PC-9 (cell line): ENCODE measurements at regions of chr15 and their contacts with region 1.

Region 1: GRCh38 chr15:82540055-82540983 is at the start of gene RPS17:
- DNase-seq: peak; percentile 79 to 96
- H3K4me3 ChIP-seq: peak within 1 kb of the TSS; percentile 100
- H3K27ac ChIP-seq: peak within 1 kb of the TSS; percentile 88
- H3K4me1 ChIP-seq: peaks cover 15% of the 10 kb centered on the region; the same call in 1 of the 2 replicates
- H3K27me3 ChIP-seq: no peaks in the 10 kb centered on the region
- CTCF ChIP-seq: peak; percentile 94
- total RNA-seq, gene RPS17: 1,891 and 1,969 TPM in 2 replicates

Region 2: GRCh38 chr15:82312586-82313349 is 227.6 kb before region 1 on chr15:
- CTCF ChIA-PET with region 1: no interaction called
- POLR2A ChIA-PET with region 1: no interaction called
- intact Hi-C with region 1: no loop called
- DNase-seq: no peak
- H3K4me3 ChIP-seq: no peak overlapping the region
- H3K27ac ChIP-seq: no peak overlapping the region
- H3K4me1 ChIP-seq: no peaks in the 10 kb centered on the region
- H3K27me3 ChIP-seq: peaks cover 10% of the 10 kb centered on the region; the same call in 1 of the 2 replicates
- CTCF ChIP-seq: no peak

Region 3: DNA sequence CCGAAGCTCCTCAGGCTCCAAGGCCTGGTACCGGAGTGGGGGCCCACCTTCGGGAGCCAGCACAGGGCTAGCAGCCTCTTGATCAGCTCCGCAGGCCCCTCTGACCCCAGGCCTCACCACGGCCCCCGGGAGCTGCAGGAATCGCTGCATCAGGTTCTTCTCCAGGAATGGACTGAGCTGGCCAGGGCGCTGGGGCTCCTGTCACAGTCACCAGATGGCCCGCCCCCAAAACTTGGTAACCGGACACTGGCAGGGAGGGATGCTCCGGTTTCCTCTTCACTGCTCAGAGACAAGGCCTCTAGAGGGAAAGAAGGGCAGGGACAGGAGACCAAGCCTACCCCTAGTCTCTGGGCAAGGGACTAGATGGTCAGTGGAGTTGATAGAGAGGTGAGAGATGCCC is 159.4 kb after region 1 on chr15:
- CTCF ChIA-PET with region 1: no interaction called
- POLR2A ChIA-PET with region 1: no interaction called
- intact Hi-C with region 1: no loop called
- DNase-seq: no peak
- H3K4me3 ChIP-seq: no peak overlapping the region
- H3K27ac ChIP-seq: no peak overlapping the region
- H3K4me1 ChIP-seq: no peaks in the 10 kb centered on the region
- H3K27me3 ChIP-seq: peaks cover 81% of the 10 kb centered on the region
- CTCF ChIP-seq: no peak

Region 4: GRCh38 chr15:82749951-82750830 is 209.9 kb after region 1 on chr15:
- CTCF ChIA-PET with region 1: no interaction called
- POLR2A ChIA-PET with region 1: interaction called, 7 read pairs
- intact Hi-C with region 1: loop called (anchors 1 kb)
- DNase-seq: peak; percentile 84 to 89
- H3K4me3 ChIP-seq: peak overlapping the region; percentile 83
- H3K27ac ChIP-seq: peak overlapping the region; percentile 74
- H3K4me1 ChIP-seq: peaks cover 25% of the 10 kb centered on the region
- H3K27me3 ChIP-seq: no peaks in the 10 kb centered on the region
- CTCF ChIP-seq: no peak

Region 5: GRCh38 chr15:82763361-82764116 is 223.2 kb after region 1 on chr15:
- CTCF ChIA-PET with region 1: no interaction called
- POLR2A ChIA-PET with region 1: no interaction called
- intact Hi-C with region 1: no loop called
- DNase-seq: no peak
- H3K4me3 ChIP-seq: no peak overlapping the region
- H3K27ac ChIP-seq: no peak overlapping the region
- H3K4me1 ChIP-seq: peaks cover 3% of the 10 kb centered on the region; the same call in 1 of the 2 replicates
- H3K27me3 ChIP-seq: no peaks in the 10 kb centered on the region
- CTCF ChIP-seq: no peak

Region 6: DNA sequence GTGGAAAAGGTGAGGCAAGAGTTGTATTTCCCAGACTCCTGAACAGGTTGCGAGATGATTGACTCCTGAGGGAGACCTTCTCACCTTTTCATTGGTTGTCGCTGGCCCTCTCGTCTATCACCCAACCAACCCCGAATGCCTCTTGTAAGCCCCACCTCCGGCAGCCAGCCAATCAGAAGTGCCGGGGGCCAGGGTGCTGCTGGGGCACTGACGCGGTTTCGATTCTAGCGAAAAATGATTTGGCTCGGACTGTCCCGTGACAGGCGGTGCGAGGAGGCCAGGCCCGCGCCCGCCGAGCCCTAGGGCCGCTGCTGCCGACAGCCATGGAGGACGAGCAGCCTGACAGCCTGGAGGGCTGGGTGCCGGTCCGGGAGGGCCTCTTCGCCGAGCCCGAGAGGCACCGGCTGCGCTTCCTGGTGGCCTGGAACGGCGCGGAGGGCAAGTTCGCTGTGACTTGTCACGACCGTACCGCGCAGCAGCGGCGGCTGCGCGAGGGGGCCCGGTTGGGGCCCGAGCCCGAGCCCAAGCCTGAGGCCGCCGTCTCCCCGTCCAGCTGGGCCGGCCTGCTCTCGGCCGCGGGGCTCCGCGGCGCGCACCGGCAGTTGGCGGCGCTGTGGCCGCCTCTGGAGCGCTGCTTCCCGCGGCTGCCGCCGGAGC is 269.2 kb after region 1 on chr15 and contains the start of gene WHAMM:
- CTCF ChIA-PET with region 1: no interaction called
- POLR2A ChIA-PET with region 1: interaction called, 5 read pairs
- intact Hi-C with region 1: loop called (anchors 1 kb)
- DNase-seq: peak; percentile 95 to 97
- H3K4me3 ChIP-seq: peak within 1 kb of the TSS; percentile 99
- H3K27ac ChIP-seq: peak within 1 kb of the TSS; percentile 80
- H3K4me1 ChIP-seq: peaks cover 17% of the 10 kb centered on the region
- H3K27me3 ChIP-seq: no peaks in the 10 kb centered on the region
- CTCF ChIP-seq: no peak
- total RNA-seq, gene WHAMM: 6.4 and 6.9 TPM in 2 replicates

Region 7: GRCh38 chr15:82890338-82891327 is 350.3 kb after region 1 on chr15:
- CTCF ChIA-PET with region 1: no interaction called
- POLR2A ChIA-PET with region 1: no interaction called
- intact Hi-C with region 1: no loop called
- DNase-seq: no peak
- H3K4me3 ChIP-seq: no peak overlapping the region
- H3K27ac ChIP-seq: no peak overlapping the region
- H3K4me1 ChIP-seq: no peaks in the 10 kb centered on the region
- H3K27me3 ChIP-seq: peaks cover 26% of the 10 kb centered on the region
- CTCF ChIP-seq: no peak

Region 8: GRCh38 chr15:82999905-83000671 is 459.8 kb after region 1 on chr15:
- CTCF ChIA-PET with region 1: no interaction called
- POLR2A ChIA-PET with region 1: no interaction called
- intact Hi-C with region 1: loop called (anchors 2 kb)
- DNase-seq: peak; percentile 14 to 50
- H3K4me3 ChIP-seq: peak overlapping the region; percentile 29; the same call in 1 of the 2 replicates
- H3K27ac ChIP-seq: no peak overlapping the region
- H3K4me1 ChIP-seq: no peaks in the 10 kb centered on the region
- H3K27me3 ChIP-seq: no peaks in the 10 kb centered on the region
- CTCF ChIP-seq: peak; percentile 69